ENCODE measurements at regions of chr12 and their contacts with region 1.

Region 1: GRCh38 chr12:113221181-113221997 is at the start of gene TPCN1:
- DNase-seq: peak; percentile 100
- H3K4me3 ChIP-seq: peak within 1 kb of the TSS; percentile 89
- H3K27ac ChIP-seq: peak within 1 kb of the TSS; percentile 42
- H3K27me3 ChIP-seq: no peaks in the 10 kb centered on the region
- CTCF ChIP-seq: no peak
- polyA plus RNA-seq, gene TPCN1: 10.9 and 11.9 TPM in 2 replicates

Region 2: GRCh38 chr12:113196996-113197395 is 24.4 kb before region 1 on chr12:
- CTCF ChIA-PET with region 1: interaction called, 3 read pairs
- POLR2A ChIA-PET with region 1: interaction called, 11 read pairs
- DNase-seq: no peak
- H3K4me3 ChIP-seq: no peak overlapping the region
- H3K27ac ChIP-seq: no peak overlapping the region
- H3K27me3 ChIP-seq: no peaks in the 10 kb centered on the region
- CTCF ChIP-seq: peak; percentile 80

Region 3: DNA sequence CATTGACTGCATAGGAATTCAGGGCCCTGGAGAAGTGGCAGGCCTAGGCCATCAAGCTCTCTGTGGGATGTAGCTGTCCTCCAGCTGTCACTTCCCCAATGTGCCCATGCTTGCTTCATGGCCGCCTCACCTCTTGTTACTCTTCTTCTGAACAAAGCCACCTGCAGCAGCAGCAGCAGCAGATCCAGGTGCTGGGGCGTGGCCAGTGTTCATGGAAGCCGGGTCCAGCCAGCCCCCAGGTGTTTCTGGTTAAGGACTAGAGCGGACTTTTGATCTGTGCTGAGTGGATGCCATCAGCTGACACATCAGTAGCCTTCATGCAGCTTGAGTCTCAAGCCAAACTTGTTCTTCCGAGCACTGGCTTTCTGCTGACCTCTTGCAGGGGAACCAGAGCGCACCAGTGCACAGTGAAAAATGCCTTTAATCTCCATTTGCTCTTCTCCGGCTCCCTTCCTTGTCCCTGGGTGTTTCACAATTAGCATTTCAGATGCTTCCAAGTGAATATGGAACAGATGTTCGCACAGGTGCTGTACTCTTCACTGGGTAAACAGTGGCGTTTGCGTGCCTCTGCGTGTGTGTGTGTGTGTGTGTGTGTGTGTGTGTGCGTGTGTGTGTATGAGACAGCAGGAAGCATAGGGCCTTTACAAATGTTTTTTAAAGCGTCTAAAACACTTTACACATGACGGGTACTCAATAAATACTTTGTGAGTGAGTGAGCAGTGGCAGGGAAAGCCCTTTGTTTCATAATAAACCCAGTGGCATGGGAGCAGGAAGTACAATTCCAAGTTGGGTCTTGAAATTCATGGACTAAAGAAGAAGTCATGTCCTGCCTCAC is 20.0 kb after region 1 on chr12:
- CTCF ChIA-PET with region 1: interaction called, 6 read pairs
- POLR2A ChIA-PET with region 1: interaction called, 11 read pairs
- DNase-seq: peak; percentile 84
- H3K4me3 ChIP-seq: no peak overlapping the region
- H3K27ac ChIP-seq: peak overlapping the region; percentile 97
- H3K27me3 ChIP-seq: no peaks in the 10 kb centered on the region
- CTCF ChIP-seq: no peak

Region 4: GRCh38 chr12:113747017-113747416 is 525.6 kb after region 1 on chr12:
- CTCF ChIA-PET with region 1: no interaction called
- POLR2A ChIA-PET with region 1: no interaction called
- DNase-seq: no peak
- H3K4me3 ChIP-seq: no peak overlapping the region
- H3K27ac ChIP-seq: no peak overlapping the region
- H3K27me3 ChIP-seq: peaks cover 10% of the 10 kb centered on the region
- CTCF ChIP-seq: no peak

Measured in AG04450 (cell line).